Activated CD4-positive, alpha-beta memory T cell treated with anti-CD3 and anti-CD28 coated beads for 36 hours (primary cell): ENCODE measurements at regions of chr20 and their contacts with region 1.

Region 1: DNA sequence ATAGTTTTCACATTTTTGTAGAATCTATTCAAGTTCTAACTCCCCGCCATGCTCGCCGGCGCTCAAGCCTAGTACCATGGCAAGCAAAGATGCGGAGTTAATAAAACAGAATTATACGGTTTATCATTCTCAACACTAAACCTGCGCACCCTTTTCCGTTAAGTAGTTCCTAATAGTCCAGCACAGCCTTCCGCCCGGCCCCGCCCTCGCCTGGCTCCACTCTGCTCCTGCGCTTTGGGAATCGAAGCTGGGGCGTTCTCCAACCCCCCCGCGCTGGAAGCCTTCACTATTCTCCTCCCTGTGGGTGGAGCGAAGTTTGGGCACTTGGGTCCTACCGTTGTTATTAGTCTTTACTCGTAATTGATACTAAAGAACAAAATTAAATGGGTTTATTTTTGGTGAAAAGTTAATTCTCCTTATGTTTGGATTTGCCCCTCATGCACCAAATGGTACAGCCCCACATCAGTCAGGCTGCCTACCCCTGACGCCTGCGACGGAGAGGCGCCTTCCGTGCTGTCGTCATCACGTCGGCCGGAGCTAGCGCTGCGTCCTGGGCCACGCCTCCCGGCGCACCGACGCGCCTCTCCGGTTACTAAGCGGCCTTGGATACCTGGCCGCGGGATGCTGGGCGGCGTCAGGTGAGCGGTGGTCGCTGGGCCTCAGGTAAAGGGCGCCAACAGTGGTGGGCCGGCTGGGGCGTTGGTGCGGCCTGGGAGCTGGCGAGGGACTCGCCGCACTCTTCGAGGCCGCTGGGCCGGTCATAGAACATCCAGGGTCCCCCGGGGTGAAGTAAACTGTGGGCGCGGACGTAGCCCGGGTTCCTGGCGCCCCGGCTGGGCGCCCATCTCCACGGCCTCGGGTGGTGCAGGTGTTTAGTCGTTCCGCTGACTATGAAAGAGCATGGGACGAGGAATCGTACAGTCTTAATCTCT is at the start of gene IFT52:
- DNase-seq: peak; percentile 92
- H3K4me3 Mint-ChIP-seq: peak within 1 kb of the TSS; percentile 86
- H3K27ac Mint-ChIP-seq: peak within 1 kb of the TSS; percentile 96
- H3K4me1 Mint-ChIP-seq: peaks cover 12% of the 10 kb centered on the region
- H3K27me3 Mint-ChIP-seq: no peaks in the 10 kb centered on the region
- total RNA-seq, gene IFT52: 15.3 to 17.0 TPM

Region 2: GRCh38 chr20:43514062-43514999 is 76.3 kb before region 1 on chr20:
- CTCF ChIA-PET with region 1: no interaction called
- POLR2A ChIA-PET with region 1: no interaction called
- intact Hi-C with region 1: loop called (anchors 1 kb)
- DNase-seq: peak; percentile 96
- H3K4me3 Mint-ChIP-seq: peak overlapping the region; percentile 87
- H3K27ac Mint-ChIP-seq: peak overlapping the region; percentile 81
- H3K4me1 Mint-ChIP-seq: peaks cover 14% of the 10 kb centered on the region
- H3K27me3 Mint-ChIP-seq: peaks cover 3% of the 10 kb centered on the region

Region 3: GRCh38 chr20:43537921-43538877 is 52.5 kb before region 1 on chr20:
- CTCF ChIA-PET with region 1: interaction called, 10 read pairs
- POLR2A ChIA-PET with region 1: no interaction called
- intact Hi-C with region 1: no loop called
- DNase-seq: peak; percentile 54
- H3K4me3 Mint-ChIP-seq: no peak overlapping the region
- H3K27ac Mint-ChIP-seq: no peak overlapping the region
- H3K4me1 Mint-ChIP-seq: no peaks in the 10 kb centered on the region
- H3K27me3 Mint-ChIP-seq: no peaks in the 10 kb centered on the region

Region 4: GRCh38 chr20:43603136-43603535 is 12.5 kb after region 1 on chr20:
- CTCF ChIA-PET with region 1: no interaction called
- POLR2A ChIA-PET with region 1: no interaction called
- intact Hi-C with region 1: no loop called
- DNase-seq: no peak
- H3K4me3 Mint-ChIP-seq: no peak overlapping the region
- H3K27ac Mint-ChIP-seq: no peak overlapping the region
- H3K4me1 Mint-ChIP-seq: no peaks in the 10 kb centered on the region
- H3K27me3 Mint-ChIP-seq: no peaks in the 10 kb centered on the region

Region 5: DNA sequence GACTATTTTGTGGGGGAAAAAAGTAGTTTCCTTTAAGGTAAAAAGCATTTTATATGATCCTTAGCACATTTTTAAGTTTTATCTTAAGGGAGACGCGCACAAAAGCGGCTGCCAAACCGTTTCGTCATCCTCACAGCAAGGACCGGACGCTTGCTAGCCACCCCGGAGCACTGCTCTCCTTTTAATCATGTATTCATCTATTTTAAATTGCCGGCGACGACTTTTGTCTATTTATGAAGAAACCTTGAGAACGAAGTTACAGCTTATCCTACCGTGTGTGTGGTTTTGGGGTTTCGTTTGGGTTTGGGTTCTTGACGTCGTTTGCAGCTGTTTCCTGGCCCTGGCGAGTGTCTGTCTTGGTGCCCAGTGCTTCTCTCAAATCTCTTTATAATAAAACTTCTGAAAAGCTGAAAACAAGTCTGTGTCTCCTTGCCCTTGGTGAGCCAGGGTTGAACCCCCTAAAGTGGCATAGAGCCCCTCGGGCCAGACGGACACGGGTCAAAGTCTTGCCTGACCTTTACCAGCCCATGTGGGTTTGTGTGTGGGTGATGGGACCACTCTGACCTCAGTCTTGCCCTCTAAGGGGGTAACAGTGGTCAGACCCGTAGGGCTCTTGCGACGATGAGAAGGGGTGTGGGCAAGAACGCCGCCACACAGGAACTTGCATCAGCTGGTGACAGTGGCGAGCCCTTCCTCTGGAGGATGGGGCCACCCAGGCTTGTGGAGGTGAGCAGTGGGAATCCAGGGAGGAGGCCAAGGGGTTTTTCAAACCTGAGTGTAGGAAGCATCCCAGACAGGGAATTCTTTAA is 478.7 kb after region 1 on chr20:
- CTCF ChIA-PET with region 1: no interaction called
- POLR2A ChIA-PET with region 1: no interaction called
- intact Hi-C with region 1: loop called (anchors 10 kb)
- DNase-seq: peak; percentile 74
- H3K4me3 Mint-ChIP-seq: peak overlapping the region; percentile 65
- H3K27ac Mint-ChIP-seq: peak overlapping the region; percentile 84
- H3K4me1 Mint-ChIP-seq: peaks cover 50% of the 10 kb centered on the region
- H3K27me3 Mint-ChIP-seq: no peaks in the 10 kb centered on the region